ENCODE measurements at regions of chr6 and their contacts with region 1.

Region 1: DNA sequence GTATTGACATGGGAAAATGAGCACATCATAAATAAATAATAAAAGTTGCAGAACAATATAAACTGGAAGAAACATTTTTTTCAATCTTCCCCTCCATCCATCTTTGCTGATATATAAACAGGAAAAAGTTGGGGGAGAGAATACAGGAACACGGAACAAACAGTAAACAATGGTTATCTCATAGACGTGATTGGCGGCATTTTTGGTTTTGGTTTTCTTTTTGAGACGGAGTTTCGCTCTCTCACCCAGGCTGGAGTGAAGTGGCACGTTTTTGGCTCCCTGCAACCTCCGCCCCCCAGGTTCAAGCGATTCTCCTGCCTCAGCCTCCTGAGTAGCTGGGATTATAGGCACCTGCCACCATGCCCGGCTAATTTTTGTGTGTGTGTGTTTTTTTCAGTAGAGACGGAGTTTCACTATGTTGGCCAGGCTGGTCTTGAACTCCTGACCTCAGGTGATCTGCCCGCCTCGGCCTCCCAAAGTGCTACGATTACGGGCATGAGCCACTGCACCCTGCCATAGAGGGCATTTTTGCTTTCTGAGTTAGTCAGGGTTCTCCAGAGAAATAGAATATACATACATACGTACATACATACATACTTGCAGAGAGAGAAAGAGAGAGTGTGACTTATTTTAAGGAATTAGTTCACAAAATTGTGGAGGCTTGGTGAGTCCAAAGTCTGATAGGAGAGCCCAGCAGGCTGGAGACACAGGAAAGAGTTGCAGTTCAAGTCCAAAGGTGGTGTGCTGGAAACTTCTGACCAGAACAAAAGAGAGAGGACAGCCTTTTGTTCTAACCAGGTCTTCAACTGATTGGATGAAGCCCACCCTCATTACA is 22.6 kb downstream of the GNL1 start:
- DNase-seq: no peak
- ATAC-seq: no peak
- H3K4me3 ChIP-seq: no peak overlapping the region
- H3K27ac ChIP-seq: no peak overlapping the region
- H3K4me1 ChIP-seq: no peaks in the 10 kb centered on the region
- H3K27me3 ChIP-seq: no peaks in the 10 kb centered on the region
- CTCF ChIP-seq: no peak
- POLR2A ChIP-seq: no peak

Region 2: GRCh38 chr6:30489081-30490025 is 44.3 kb before region 1 on chr6 and contains the start of gene HLA-E:
- intact Hi-C with region 1: loop called (anchors 5 kb)
- DNase-seq: peak; percentile 92 to 99 (median 94)
- ATAC-seq: peak; percentile 98
- H3K4me3 ChIP-seq: peak within 1 kb of the TSS; percentile 83 to 93
- H3K27ac ChIP-seq: peak within 1 kb of the TSS; percentile 88 to 95 (median 92)
- H3K4me1 ChIP-seq: peaks cover 18% of the 10 kb centered on the region
- H3K27me3 ChIP-seq: no peaks in the 10 kb centered on the region
- CTCF ChIP-seq: no peak
- POLR2A ChIP-seq: peak; percentile 93 to 99 (median 99)
- total RNA-seq, gene HLA-E: 133 to 216 TPM

Region 3: DNA sequence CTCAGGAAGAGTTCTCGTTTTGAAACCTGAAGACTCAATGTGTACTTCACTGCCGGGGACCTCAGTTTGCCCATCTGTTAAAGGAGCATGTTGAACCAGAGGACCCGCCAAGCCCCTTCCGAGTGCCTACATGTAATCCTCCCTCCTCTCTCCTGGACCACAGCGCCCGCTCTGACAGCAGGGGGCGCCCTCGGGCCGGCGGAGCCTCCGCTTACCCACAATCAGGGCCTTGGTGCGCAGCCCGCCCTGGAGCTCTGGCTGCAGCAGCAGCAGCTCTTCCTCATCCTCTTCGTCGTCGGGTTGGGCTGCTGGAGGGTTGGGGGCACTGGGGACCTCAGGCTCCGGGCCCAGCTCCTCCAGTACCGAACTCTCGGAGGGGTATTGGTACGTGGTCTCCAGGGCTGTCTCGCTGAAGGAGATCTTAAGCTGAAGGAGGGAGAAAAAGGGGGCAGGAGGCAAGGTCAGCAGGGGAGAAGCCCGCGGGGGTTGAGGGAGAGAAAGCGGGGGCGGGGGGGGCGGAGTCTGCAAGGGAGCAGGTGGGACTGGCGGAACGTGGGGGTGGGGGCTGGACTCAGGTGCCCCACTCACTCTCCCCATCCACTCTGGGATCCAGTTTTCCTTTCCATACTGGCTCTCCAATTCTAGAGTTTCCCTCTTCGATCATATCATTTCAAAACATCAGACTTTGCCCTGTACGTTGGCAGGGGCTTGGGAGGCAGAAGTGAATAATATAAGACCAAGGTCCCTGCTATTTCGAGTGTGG is 145.5 kb after region 1 on chr6:
- intact Hi-C with region 1: no loop called
- DNase-seq: peak; percentile 84 to 88 (median 88)
- ATAC-seq: peak; percentile 88
- H3K4me3 ChIP-seq: no peak overlapping the region
- H3K27ac ChIP-seq: peak overlapping the region in 3 of 4 donors; percentile 7 to 51 (median 27)
- H3K4me1 ChIP-seq: peaks cover 43% of the 10 kb centered on the region
- H3K27me3 ChIP-seq: no peaks in the 10 kb centered on the region
- CTCF ChIP-seq: peak; percentile 92 to 97 (median 95)
- POLR2A ChIP-seq: no peak

Measured in body of pancreas (tissue), 4 donors.